ENCODE measurements at regions of chr2 and their contacts with region 1.

Region 1: GRCh38 chr2:180125245-180125962 is 118.3 kb upstream of the CWC22 start:
- DNase-seq: peak in 2 of 4 experiments; percentile 24 to 51
- ATAC-seq: peak; percentile 89
- H3K4me3 ChIP-seq: no peak overlapping the region
- H3K27ac ChIP-seq: no peak overlapping the region
- H3K4me1 ChIP-seq: no peaks in the 10 kb centered on the region
- H3K27me3 ChIP-seq: no peaks in the 10 kb centered on the region
- CTCF ChIP-seq: peak; percentile 49 to 64 (median 59)
- EP300 ChIP-seq: no peak
- POLR2A ChIP-seq: no peak
- RAD21 ChIP-seq: peak; percentile 50 to 56

Region 2: GRCh38 chr2:179487010-179487731 is 638.2 kb before region 1 on chr2:
- CTCF ChIA-PET with region 1: no interaction called
- POLR2A ChIA-PET with region 1: no interaction called
- in situ Hi-C with region 1: no loop called
- intact Hi-C with region 1: no loop called
- DNase-seq: no peak
- ATAC-seq: no peak
- H3K4me3 ChIP-seq: no peak overlapping the region
- H3K27ac ChIP-seq: no peak overlapping the region
- H3K4me1 ChIP-seq: no peaks in the 10 kb centered on the region
- H3K27me3 ChIP-seq: no peaks in the 10 kb centered on the region
- CTCF ChIP-seq: no peak
- EP300 ChIP-seq: no peak
- POLR2A ChIP-seq: no peak
- RAD21 ChIP-seq: no peak

Region 3: DNA sequence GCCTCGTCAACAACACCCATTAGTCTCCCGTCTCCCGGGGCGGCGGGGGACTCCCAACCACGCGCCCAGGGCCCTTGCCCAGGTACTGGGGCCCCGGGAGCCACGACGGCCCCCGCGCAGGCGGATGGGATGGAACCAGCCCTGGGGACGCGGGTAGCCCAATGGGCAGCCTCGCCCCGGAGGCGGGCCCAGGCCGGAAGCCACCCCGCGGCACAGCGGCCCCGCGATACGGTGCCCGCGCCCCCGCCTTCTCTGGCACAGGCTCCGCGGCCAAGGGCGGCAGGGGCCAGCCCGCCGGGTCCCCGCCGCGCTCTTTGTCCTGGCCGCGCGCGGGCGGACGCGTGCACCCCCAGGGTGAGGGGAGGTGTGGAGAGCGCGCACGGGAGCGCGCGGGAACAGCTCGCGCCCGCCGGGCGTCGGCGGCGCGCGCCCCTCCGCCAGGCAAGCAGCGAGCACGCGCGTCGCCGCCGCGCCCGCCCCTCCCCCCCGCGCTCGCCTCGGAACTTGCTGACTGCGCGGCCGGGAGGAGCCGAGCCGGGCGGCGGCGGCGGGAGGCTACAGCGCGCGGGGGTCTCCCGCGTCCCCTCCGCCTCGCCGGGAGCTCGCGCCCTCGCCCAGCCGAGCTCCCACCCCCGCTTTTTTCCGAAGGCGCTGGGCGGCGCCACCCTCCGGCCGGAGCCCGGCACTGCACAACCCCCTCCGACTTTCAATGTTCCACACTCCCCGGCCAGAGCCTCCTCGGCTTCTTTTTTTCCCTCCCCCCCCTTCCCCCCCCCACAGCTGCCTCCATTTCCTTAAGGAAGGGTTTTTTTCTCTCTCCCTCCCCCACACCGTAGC is 854.9 kb after region 1 on chr2 and contains the start of gene UBE2E3:
- CTCF ChIA-PET with region 1: no interaction called
- POLR2A ChIA-PET with region 1: no interaction called
- in situ Hi-C with region 1: no loop called
- intact Hi-C with region 1: loop called (anchors 10 kb)
- DNase-seq: peak; percentile 89 to 94 (median 92)
- ATAC-seq: peak; percentile 68
- H3K4me3 ChIP-seq: peak within 1 kb of the TSS; percentile 53
- H3K27ac ChIP-seq: peak within 1 kb of the TSS; percentile 78
- H3K4me1 ChIP-seq: peaks cover 8 to 25% of the 10 kb centered on the region in 2 experiments; a peak in 4 of 5 replicates
- H3K27me3 ChIP-seq: no peaks in the 10 kb centered on the region
- CTCF ChIP-seq: peak; percentile 52 to 74 (median 72)
- EP300 ChIP-seq: no peak
- POLR2A ChIP-seq: peak; percentile 66
- RAD21 ChIP-seq: peak; percentile 45 to 57
- polyA plus RNA-seq, gene UBE2E3: 84.8 to 97.1 TPM

Region 4: DNA sequence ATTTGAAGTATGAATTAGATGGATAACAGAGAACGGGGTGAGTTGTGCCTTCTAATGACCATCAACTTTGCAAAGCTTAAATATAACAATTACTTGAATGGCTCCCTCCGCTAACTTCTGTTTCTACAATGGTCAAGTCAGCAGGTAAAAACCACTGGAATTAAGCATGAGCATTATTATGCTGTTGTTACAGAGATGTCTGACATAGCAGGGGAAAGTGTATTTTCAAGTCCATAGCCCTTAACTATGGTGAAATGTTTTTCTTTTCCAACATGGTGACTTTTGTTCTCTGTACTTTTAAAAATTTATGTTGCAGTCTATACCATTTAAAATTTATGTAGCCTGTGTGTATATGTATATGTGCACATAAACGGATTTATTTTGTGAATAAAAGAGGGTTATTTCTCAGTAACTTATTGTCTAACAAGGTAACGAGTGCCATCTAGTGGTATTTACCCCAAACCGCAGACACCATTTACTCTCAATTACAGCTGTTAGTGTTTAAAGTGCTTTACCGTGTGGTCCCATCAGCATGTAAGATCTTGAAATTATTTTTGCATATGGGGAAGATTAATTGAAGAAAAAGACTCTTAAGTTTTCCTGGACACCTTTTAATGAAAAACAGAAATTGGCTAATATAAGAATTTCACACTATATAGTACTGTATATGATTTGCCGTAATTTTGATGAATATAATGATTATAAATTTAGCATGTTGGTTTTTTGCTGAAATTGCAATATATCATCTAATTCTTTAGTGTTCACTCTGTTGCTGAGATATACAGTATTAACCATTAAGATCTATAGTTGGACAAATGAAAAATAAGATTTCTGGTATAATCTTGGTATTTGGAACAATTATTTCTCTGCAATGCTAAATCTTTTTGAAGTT is 933.2 kb after region 1 on chr2:
- CTCF ChIA-PET with region 1: interaction called, 36 read pairs
- POLR2A ChIA-PET with region 1: no interaction called
- in situ Hi-C with region 1: loop called (anchors 25 kb)
- intact Hi-C with region 1: loop called (anchors 1 kb)
- DNase-seq: peak; percentile 43 to 55 (median 50)
- ATAC-seq: peak; percentile 89
- H3K4me3 ChIP-seq: no peak overlapping the region
- H3K27ac ChIP-seq: no peak overlapping the region
- H3K4me1 ChIP-seq: no peaks in the 10 kb centered on the region
- H3K27me3 ChIP-seq: no peaks in the 10 kb centered on the region
- CTCF ChIP-seq: peak; percentile 48 to 86 (median 74); a peak in 5 of 6 replicates
- EP300 ChIP-seq: no peak
- POLR2A ChIP-seq: no peak
- RAD21 ChIP-seq: peak; percentile 93

Region 5: GRCh38 chr2:181466661-181467576 is 1341.5 kb after region 1 on chr2:
- CTCF ChIA-PET with region 1: no interaction called
- POLR2A ChIA-PET with region 1: no interaction called
- in situ Hi-C with region 1: no loop called
- intact Hi-C with region 1: loop called (anchors 1 kb)
- DNase-seq: peak; percentile 7 to 63 (median 34)
- ATAC-seq: peak; percentile 59; the same call in 1 of the 3 replicates
- H3K4me3 ChIP-seq: no peak overlapping the region
- H3K27ac ChIP-seq: no peak overlapping the region
- H3K4me1 ChIP-seq: no peaks in the 10 kb centered on the region
- H3K27me3 ChIP-seq: no peaks in the 10 kb centered on the region
- CTCF ChIP-seq: peak; percentile 48 to 64 (median 53)
- EP300 ChIP-seq: no peak
- POLR2A ChIP-seq: no peak
- RAD21 ChIP-seq: peak; percentile 55 to 63

Region 6: GRCh38 chr2:181715033-181715630 is 1589.7 kb after region 1 on chr2:
- CTCF ChIA-PET with region 1: interaction called, 20 read pairs
- POLR2A ChIA-PET with region 1: no interaction called
- in situ Hi-C with region 1: loop called (anchors 10 kb)
- intact Hi-C with region 1: loop called (anchors 1 kb)
- DNase-seq: peak; percentile 37 to 81 (median 52)
- ATAC-seq: peak; percentile 90
- H3K4me3 ChIP-seq: no peak overlapping the region
- H3K27ac ChIP-seq: no peak overlapping the region
- H3K4me1 ChIP-seq: no peaks in the 10 kb centered on the region
- H3K27me3 ChIP-seq: no peaks in the 10 kb centered on the region
- CTCF ChIP-seq: peak; percentile 57 to 84 (median 68); a peak in 5 of 6 replicates
- EP300 ChIP-seq: no peak
- POLR2A ChIP-seq: no peak
- RAD21 ChIP-seq: peak; percentile 78 to 93

Region 7: DNA sequence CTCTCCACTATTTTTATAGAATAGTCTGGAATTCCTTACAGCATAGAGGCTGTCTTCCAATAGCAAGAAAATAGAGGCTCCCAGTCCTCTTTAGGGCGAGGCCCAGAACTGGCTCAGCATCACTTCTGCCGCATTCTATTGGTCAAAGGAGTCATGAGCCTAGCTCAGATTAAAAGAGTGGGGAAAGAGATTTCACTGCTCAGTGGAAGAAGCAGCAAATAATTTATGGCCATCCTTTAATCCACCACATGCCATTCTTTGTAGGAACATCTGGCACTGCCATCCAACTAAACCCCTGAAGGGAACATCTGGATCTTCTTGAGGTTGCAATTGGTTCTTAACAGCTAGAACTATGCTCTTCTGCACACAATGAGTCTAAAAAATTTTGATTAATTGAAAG is 1598.3 kb after region 1 on chr2:
- CTCF ChIA-PET with region 1: no interaction called
- POLR2A ChIA-PET with region 1: no interaction called
- in situ Hi-C with region 1: loop called (anchors 10 kb)
- intact Hi-C with region 1: no loop called
- DNase-seq: no peak
- ATAC-seq: no peak
- H3K4me3 ChIP-seq: no peak overlapping the region
- H3K27ac ChIP-seq: no peak overlapping the region
- H3K4me1 ChIP-seq: no peaks in the 10 kb centered on the region
- H3K27me3 ChIP-seq: no peaks in the 10 kb centered on the region
- CTCF ChIP-seq: no peak
- EP300 ChIP-seq: no peak
- POLR2A ChIP-seq: no peak
- RAD21 ChIP-seq: no peak

Region 8: GRCh38 chr2:182077451-182078142 is 1952.2 kb after region 1 on chr2:
- CTCF ChIA-PET with region 1: no interaction called
- POLR2A ChIA-PET with region 1: no interaction called
- in situ Hi-C with region 1: no loop called
- intact Hi-C with region 1: loop called (anchors 10 kb)
- DNase-seq: peak in 2 of 4 experiments; percentile 7 to 68
- ATAC-seq: peak; percentile 74
- H3K4me3 ChIP-seq: no peak overlapping the region
- H3K27ac ChIP-seq: no peak overlapping the region
- H3K4me1 ChIP-seq: no peaks in the 10 kb centered on the region
- H3K27me3 ChIP-seq: no peaks in the 10 kb centered on the region
- CTCF ChIP-seq: peak; percentile 21 to 64 (median 59); a peak in 5 of 6 replicates
- EP300 ChIP-seq: no peak
- POLR2A ChIP-seq: no peak
- RAD21 ChIP-seq: peak; percentile 70 to 83

Measured in K562 (cell line).